Activated T-helper 2 cell treated with anti-CD3 and anti-CD28 coated beads, Interferon-gamma antibody, Interleukin-2, Interleukin-4, amounts not matched to agents 10 μg/mL and 5 μg/mL and 100 μg/mL, durations not matched to agents 14 hours and 24 hours and 36 hours (primary cell): ENCODE measurements at regions of chr17 and their contacts with region 1.

Region 1: GRCh38 chr17:46193626-46194392 is 580 bp upstream of the KANSL1 start:
- DNase-seq: peak; percentile 94
- H3K4me3 Mint-ChIP-seq: peak overlapping the region; percentile 83
- H3K27ac Mint-ChIP-seq: peak overlapping the region; percentile 94
- H3K4me1 Mint-ChIP-seq: peaks cover 58% of the 10 kb centered on the region
- H3K27me3 Mint-ChIP-seq: no peaks in the 10 kb centered on the region

Region 2: DNA sequence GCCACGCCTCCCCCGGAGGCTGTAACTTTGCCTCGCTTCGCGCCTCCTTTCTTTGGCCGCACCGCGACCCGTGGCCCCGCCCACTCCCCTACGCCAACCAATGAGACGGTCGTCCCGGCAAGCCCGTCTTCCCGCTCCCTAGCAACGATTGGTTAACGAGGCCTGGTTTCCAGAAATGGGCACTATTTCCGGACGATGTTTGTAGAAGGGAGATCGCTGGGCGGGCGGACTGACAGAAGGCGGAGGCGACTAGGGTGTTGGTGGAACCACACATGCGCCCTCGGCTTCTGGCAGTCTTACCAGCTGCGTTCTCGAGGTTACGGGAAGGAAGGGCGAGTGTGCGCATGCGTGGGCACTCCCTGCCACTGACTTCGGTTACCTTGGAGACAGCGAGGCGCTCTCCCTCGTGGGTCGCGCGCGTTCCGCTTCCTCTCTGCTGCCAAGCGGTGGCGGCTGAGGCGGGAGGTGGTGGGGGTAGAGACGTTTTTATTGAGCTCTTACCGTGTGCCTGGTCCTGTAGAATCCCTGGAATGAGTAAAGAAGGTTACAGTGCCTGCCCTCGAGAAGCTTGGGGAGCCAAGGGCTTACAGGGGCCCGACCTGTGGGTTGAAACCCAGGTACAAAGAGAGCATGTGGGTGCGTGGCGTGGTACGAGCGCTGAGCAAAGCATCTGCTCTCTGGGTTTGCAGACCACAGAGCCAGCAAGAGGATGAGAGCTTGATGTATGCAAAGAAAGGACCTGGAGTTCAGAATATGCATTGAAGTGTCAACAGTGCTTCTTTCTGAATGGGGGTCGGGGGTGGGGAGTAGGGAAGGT is 876.5 kb before region 1 on chr17:
- intact Hi-C with region 1: loop called (anchors 10 kb)
- DNase-seq: peak; percentile 100
- H3K4me3 Mint-ChIP-seq: peak overlapping the region; percentile 83
- H3K27ac Mint-ChIP-seq: peak overlapping the region; percentile 90
- H3K4me1 Mint-ChIP-seq: peaks cover 66% of the 10 kb centered on the region
- H3K27me3 Mint-ChIP-seq: peaks cover 1% of the 10 kb centered on the region

Region 3: DNA sequence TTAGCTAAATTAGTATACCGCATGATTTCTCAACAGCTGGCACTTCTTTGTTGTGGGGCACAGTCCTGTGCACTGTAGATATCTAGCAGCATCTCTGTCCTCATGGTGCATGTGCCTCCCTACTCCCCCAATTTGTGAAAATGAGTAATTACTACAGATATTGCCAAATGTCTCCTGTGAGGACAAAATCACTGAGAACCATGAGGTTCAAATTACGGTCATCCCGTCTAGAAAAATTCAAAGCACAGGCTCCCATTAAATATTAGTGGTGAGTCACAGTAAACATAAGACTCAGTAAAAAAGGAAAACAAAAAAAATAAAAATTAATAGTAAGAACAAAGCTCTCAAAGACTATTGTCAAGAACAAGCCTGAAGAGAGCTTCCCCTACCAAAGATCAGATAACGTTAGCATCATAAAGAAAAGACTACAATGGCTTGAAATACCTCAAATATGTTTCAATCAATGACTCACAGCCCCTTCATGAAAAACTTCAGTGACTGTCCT is 137.0 kb before region 1 on chr17:
- intact Hi-C with region 1: loop called (anchors 1 kb)
- DNase-seq: no peak
- H3K4me3 Mint-ChIP-seq: no peak overlapping the region
- H3K27ac Mint-ChIP-seq: peak overlapping the region; percentile 78
- H3K4me1 Mint-ChIP-seq: peaks cover 44% of the 10 kb centered on the region
- H3K27me3 Mint-ChIP-seq: no peaks in the 10 kb centered on the region

Region 4: DNA sequence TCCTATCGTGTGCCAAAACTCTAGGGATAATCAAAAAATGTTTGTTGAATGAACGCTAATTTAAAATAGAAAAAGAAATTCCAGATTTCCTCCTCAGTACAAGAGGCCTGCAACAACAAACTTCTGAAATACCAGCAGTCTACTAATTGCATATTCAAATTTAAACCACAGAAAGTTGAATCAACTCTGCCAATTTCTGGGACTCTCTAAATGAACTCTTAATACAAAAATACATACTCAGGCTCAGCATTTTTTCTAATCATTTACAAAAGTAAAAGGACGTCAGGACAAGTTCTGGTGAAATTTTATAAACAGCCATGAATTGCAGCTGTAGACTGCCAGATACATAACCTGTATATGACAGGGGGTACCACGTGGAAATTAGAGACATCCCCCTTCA is 49.6 kb before region 1 on chr17:
- intact Hi-C with region 1: loop called (anchors 1 kb)
- DNase-seq: no peak
- H3K4me3 Mint-ChIP-seq: no peak overlapping the region
- H3K27ac Mint-ChIP-seq: peak overlapping the region; percentile 26
- H3K4me1 Mint-ChIP-seq: peaks cover 75% of the 10 kb centered on the region
- H3K27me3 Mint-ChIP-seq: no peaks in the 10 kb centered on the region

Region 5: GRCh38 chr17:46163316-46163715 is 30.5 kb before region 1 on chr17:
- intact Hi-C with region 1: no loop called
- DNase-seq: no peak
- H3K4me3 Mint-ChIP-seq: no peak overlapping the region
- H3K27ac Mint-ChIP-seq: no peak overlapping the region
- H3K4me1 Mint-ChIP-seq: peaks cover 56% of the 10 kb centered on the region
- H3K27me3 Mint-ChIP-seq: no peaks in the 10 kb centered on the region

Region 6: GRCh38 chr17:46212634-46213435 is 19.0 kb after region 1 on chr17:
- intact Hi-C with region 1: no loop called
- DNase-seq: peak; percentile 40
- H3K4me3 Mint-ChIP-seq: no peak overlapping the region
- H3K27ac Mint-ChIP-seq: no peak overlapping the region
- H3K4me1 Mint-ChIP-seq: peaks cover 27% of the 10 kb centered on the region
- H3K27me3 Mint-ChIP-seq: no peaks in the 10 kb centered on the region

Region 7: DNA sequence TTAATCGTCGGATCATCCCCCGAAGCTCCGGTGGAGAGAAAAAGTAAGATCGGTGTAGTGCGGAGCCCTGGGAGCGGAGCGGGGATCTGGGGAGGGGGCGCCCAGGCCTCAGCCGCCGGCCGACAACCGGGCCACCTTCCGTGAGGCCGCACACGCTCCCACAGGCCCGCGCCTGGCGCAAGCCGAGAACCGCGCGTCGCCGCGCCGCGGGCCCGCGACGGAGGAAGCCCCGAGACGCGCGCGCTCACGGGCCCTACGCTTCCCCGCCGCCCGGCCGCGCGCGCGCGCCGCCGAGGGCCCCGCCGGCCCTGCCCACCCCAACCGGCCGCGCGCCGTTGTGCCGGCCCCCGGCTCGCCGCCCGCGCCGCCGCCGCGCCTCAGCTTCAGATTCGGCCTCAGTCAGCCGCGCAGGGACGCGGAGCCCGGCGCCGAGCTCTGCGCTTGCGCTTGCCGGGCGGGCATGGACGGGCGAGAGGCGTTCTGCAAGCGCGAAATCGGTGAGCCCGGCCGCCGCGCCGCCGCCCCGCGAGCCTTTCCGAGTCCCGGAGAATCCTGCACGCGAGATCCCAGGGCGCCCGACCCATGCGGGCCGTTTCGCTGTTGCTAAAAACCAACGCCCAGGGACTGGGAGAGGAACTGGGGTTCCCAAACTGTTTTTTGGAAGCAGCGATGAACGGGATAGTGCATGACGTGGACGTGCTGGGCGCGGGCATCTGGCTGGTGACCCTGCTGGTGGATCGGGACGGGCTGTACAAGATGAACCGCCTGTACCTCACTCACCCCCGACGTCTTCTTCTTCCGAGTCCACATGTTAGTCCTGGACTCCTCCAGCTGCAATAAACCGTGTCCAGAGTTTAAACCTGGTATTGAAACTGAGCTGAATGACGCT is 73.1 kb after region 1 on chr17:
- intact Hi-C with region 1: loop called (anchors 5 kb)
- DNase-seq: peak; percentile 84
- H3K4me3 Mint-ChIP-seq: peak overlapping the region; percentile 82
- H3K27ac Mint-ChIP-seq: peak overlapping the region; percentile 61
- H3K4me1 Mint-ChIP-seq: peaks cover 37% of the 10 kb centered on the region
- H3K27me3 Mint-ChIP-seq: peaks cover 37% of the 10 kb centered on the region